Activated CD4-positive, alpha-beta T cell treated with anti-CD3 and anti-CD28 coated beads for 36 hours (primary cell): ENCODE measurements at regions of chr1 and their contacts with region 1.

Region 1: GRCh38 chr1:2233997-2234761 is 6.1 kb downstream of the SKI start:
- DNase-seq: peak; percentile 81
- ATAC-seq: peak; percentile 73
- H3K4me3 Mint-ChIP-seq: peak overlapping the region; percentile 73
- H3K27ac Mint-ChIP-seq: peak overlapping the region; percentile 90
- H3K4me1 Mint-ChIP-seq: peaks cover 59% of the 10 kb centered on the region
- H3K27me3 Mint-ChIP-seq: no peaks in the 10 kb centered on the region

Region 2: DNA sequence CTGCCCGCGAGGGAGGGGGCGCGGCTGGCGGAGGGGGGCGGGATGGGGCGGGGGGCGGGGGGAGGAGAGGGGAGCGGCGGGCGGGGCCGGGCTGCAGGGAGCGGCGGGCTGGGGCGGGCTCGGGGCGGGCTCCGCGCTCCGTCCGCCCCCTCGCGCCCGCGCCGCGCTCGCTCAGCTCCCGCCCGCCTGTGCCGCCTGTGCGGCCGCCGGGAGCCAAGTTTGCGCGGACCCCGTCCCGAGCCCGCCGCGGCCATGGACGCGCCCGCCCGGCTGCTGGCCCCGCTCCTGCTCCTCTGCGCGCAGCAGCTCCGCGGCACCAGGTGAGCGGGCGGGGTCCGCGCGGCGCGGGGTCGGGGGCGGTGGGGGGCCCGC is 215.0 kb before region 1 on chr1 and contains the start of gene GABRD:
- CTCF ChIA-PET with region 1: no interaction called
- POLR2A ChIA-PET with region 1: no interaction called
- intact Hi-C with region 1: no loop called
- DNase-seq: peak; percentile 58
- ATAC-seq: peak; percentile 79
- H3K4me3 Mint-ChIP-seq: peak within 1 kb of the TSS; percentile 35
- H3K27ac Mint-ChIP-seq: no peak within 1 kb of the TSS
- H3K4me1 Mint-ChIP-seq: peaks cover 5% of the 10 kb centered on the region
- H3K27me3 Mint-ChIP-seq: peaks cover 52% of the 10 kb centered on the region
- total RNA-seq, gene GABRD: not detected

Region 3: GRCh38 chr1:2290595-2291510 is 56.7 kb after region 1 on chr1:
- CTCF ChIA-PET with region 1: no interaction called
- POLR2A ChIA-PET with region 1: no interaction called
- intact Hi-C with region 1: loop called (anchors 1 to 2 kb)
- DNase-seq: peak; percentile 94
- ATAC-seq: peak; percentile 89
- H3K4me3 Mint-ChIP-seq: peak overlapping the region; percentile 75
- H3K27ac Mint-ChIP-seq: peak overlapping the region; percentile 95
- H3K4me1 Mint-ChIP-seq: peaks cover 87% of the 10 kb centered on the region
- H3K27me3 Mint-ChIP-seq: no peaks in the 10 kb centered on the region

Region 4: GRCh38 chr1:2352840-2353550 is 118.8 kb after region 1 on chr1:
- CTCF ChIA-PET with region 1: no interaction called
- POLR2A ChIA-PET with region 1: no interaction called
- intact Hi-C with region 1: no loop called
- DNase-seq: no peak
- ATAC-seq: no peak
- H3K4me3 Mint-ChIP-seq: no peak overlapping the region
- H3K27ac Mint-ChIP-seq: no peak overlapping the region
- H3K4me1 Mint-ChIP-seq: no peaks in the 10 kb centered on the region
- H3K27me3 Mint-ChIP-seq: no peaks in the 10 kb centered on the region

Region 5: GRCh38 chr1:2381741-2382620 is 147.8 kb after region 1 on chr1:
- CTCF ChIA-PET with region 1: interaction called, 16 read pairs
- POLR2A ChIA-PET with region 1: no interaction called
- intact Hi-C with region 1: loop called (anchors 1 to 5 kb)
- DNase-seq: peak; percentile 90
- ATAC-seq: peak; percentile 97
- H3K4me3 Mint-ChIP-seq: no peak overlapping the region
- H3K27ac Mint-ChIP-seq: no peak overlapping the region
- H3K4me1 Mint-ChIP-seq: no peaks in the 10 kb centered on the region
- H3K27me3 Mint-ChIP-seq: no peaks in the 10 kb centered on the region